ENCODE measurements at regions of chr12 and their contacts with region 1.

Region 1: DNA sequence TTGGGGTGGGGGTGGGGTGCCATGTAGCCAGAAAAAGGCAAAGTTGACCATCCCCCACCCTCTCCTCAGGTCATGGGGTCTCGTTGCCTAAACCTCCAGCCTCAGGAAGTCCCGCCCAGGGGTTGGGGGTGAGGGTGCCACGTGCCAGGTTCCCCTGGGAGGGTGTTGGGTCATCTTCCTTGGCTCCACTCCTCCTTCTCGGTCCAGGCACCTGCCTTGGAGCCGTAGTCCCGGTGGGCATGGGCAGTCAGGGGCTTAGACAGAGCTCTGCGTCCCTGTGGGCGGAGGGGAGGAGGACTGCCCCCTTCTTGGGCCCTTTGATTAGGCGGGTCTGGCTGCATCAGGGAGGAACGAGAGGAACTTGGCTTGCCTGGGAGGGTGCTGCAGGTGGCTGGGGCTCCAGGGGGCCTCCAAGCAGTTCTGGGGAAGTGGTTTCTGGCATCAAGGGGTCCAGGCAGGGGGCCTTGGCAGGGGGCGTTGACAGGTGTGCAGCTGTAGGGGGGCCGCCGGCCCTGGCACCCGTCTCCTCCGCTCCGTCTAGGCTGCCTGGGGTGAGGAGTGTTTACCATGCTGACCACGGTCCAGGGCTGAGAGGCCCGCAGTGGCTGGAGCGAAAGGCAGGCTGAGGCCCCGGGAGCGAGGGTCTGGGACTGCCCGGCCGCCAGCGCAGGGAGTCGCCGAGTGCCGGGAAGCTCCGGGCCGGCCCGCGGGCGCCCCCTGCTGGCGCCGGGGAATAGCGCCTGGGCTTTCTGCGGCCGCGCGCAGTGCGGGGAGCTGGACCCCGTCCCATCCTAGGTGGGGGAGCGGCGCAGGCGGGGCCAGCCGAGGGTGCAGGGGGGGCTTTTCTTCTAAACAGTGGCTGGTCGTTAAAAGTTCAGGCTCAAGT is 7.9 kb downstream of the SETD1B start:
- H3K4me3 ChIP-seq: peak overlapping the region; percentile 33
- H3K27ac ChIP-seq: peak overlapping the region; percentile 34; the same call in 1 of the 2 replicates
- H3K4me1 ChIP-seq: peaks cover 5% of the 10 kb centered on the region; the same call in 1 of the 2 replicates
- CTCF ChIP-seq: peak; percentile 55

Region 2: DNA sequence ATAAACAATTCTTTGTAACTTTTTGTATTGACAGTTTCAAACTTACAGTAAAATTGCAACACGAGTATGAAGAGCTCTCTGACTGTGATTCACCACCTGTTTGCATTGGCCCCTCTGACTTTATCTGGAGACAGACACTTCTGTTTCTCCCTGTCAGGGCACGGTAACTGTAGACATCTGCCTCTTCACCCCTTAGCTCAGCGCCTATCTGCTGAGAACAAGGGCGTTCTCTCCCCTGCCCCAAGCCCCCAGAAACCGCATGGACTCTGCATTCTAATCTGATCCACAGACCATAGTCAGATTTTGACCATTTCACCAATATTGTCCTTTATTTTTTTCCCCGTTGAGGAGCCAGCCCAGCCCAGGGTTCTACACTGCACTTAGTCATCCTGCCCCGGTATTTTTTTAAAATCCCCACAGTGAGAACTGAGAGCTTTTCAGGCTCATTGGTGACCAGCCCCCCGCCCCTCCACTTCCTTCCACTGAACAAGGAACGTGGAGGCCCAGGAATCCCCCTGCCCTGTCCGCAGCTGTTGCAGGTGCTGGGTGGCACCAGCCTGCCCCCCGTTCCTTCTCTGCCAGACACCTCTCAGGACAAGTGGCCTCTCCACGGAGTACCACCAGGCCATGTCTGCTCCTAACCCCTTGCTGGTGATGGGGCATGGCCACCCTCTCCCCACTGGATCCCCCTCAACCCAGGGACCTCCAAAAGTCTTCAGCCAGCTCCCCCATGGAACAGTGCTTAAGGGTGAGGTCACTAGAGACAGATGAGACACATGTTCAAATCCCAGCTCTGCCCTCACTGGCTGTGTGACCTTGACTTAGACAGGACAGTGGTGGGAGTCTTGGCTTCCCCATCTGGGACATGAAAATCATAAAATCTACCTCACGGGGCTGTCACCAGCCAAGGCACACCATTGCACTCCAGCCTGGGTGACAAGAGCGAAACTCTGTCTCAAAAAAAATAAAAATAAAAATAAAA is 29.4 kb before region 1 on chr12:
- CTCF ChIA-PET with region 1: interaction called, 12 read pairs
- POLR2A ChIA-PET with region 1: no interaction called
- H3K4me3 ChIP-seq: no peak overlapping the region
- H3K27ac ChIP-seq: 0 out of 2 replicates have a peak overlapping the region, but pooled peaks have one; percentile 8
- H3K4me1 ChIP-seq: no peaks in the 10 kb centered on the region
- CTCF ChIP-seq: no peak

Region 3: DNA sequence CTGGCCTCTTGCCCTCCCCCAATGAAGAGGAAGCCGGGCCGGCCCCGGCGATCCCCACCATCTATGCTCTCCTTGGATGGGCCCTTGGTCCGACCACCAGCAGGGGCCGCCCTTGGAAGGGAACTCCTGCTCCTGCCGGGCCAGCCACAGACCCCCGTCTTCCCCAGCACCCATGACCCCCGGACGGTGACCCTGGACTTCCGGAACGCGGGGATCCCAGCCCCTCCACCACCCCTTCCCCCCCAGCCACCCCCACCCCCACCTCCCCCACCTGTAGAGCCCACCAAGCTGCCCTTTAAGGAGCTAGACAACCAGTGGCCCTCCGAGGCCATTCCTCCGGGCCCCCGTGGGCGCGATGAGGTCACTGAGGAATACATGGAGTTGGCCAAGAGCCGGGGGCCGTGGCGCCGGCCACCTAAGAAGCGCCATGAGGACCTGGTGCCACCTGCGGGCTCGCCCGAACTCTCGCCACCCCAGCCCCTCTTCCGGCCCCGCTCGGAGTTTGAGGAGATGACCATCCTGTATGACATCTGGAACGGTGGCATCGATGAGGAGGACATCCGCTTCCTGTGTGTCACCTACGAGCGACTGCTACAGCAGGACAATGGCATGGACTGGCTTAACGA is 11.5 kb after region 1 on chr12:
- CTCF ChIA-PET with region 1: interaction called, 23 read pairs
- POLR2A ChIA-PET with region 1: interaction called, 3 read pairs
- H3K4me3 ChIP-seq: no peak overlapping the region
- H3K27ac ChIP-seq: no peak overlapping the region
- H3K4me1 ChIP-seq: no peaks in the 10 kb centered on the region
- CTCF ChIP-seq: no peak

Region 4: GRCh38 chr12:121839106-121839992 is 27.7 kb after region 1 on chr12:
- CTCF ChIA-PET with region 1: interaction called, 24 read pairs
- POLR2A ChIA-PET with region 1: interaction called, 5 read pairs
- H3K4me3 ChIP-seq: peak overlapping the region; percentile 55
- H3K27ac ChIP-seq: peak overlapping the region; percentile 46; the same call in 1 of the 2 replicates
- H3K4me1 ChIP-seq: peaks cover 5% of the 10 kb centered on the region; the same call in 1 of the 2 replicates
- CTCF ChIP-seq: peak; percentile 92

Region 5: DNA sequence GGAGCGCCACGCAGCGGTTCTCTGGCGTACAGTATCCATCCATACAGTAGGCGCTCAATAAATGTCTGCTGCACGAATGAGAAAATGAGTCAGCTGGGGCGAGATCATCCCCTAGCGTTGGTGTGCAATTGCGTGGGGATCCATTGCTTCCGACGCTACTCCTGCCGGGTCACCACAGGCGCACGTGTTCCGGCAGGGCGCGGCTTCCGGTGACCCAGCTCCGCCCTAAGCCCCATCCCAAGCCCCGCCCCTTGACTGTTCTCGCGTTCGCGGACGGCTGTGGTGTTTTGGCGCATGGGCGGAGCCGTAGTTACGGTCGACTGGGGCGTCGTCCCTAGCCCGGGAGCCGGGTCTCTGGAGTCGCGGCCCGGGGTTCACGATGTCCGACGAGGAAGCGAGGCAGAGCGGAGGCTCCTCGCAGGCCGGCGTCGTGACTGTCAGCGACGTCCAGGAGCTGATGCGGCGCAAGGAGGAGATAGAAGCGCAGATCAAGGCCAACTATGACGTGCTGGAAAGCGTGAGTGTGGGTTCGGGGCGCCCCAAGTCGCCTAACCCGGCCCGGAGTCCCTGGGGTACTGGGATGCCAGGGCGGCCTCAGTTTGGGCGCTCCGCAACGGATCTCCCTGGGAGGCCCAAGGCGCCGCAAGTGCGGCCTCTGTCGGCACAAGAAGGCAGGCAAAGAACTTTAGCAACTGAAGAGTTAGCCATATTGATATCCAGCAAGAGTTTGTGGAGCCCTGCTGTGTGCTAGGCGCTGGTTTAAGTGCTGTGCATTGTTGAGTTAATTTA is 77.0 kb after region 1 on chr12 and contains the start of gene PSMD9:
- CTCF ChIA-PET with region 1: interaction called, 7 read pairs
- POLR2A ChIA-PET with region 1: interaction called, 12 read pairs
- H3K4me3 ChIP-seq: peak within 1 kb of the TSS; percentile 81
- H3K27ac ChIP-seq: peak within 1 kb of the TSS; percentile 84
- H3K4me1 ChIP-seq: peaks cover 9% of the 10 kb centered on the region; the same call in 1 of the 2 replicates
- CTCF ChIP-seq: peak; percentile 97

Measured in HEK293 (cell line).